ENCODE measurements at regions of chr3 and their contacts with region 1.

Region 1: DNA sequence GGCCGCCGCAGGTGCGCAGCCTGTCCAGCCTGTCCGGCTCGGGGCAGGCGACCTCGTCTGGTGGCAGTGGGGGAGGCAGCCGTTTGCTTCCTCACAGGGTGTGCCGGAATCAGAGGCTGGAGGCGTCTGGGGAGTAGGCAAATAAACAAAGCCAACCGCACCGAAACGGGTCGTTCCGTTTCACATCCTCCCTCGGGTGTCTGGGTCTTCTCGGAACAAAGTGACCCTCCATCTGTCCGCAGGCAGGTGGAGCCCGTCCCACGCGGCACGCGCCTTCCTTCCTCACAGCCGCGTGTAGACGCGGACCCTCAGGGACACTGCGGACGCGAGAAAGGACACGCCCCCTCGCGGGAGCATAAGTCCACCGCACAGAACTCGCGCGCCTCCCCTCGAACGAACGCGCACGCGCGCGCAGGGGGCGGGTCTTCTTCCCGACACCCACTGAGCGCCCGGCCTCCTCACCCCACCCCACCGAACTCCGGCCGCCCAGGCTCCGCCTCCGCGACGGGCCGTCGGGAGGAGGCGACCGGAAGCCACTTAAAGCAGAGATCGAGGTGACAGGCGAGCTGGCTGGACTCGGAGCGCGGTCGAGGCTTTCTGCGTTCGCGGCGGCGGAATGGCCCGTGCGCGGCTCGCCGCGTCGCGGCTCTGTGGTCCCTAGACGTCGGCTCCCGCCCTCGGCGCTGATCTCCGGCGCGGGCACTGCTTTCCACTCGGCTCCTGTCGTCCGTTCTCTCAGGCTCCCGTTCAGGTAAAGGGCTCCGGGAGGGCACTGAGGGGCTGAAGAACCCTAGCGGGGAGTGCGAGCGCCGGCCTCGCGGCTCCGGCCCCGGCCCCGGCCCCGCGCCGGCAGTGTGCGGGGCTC is at the start of gene TIPARP:
- DNase-seq: peak; percentile 98
- H3K4me3 ChIP-seq: peak within 1 kb of the TSS; percentile 61 to 94 (median 76)
- H3K27ac ChIP-seq: peak within 1 kb of the TSS; percentile 99
- H3K4me1 ChIP-seq: peaks cover 22% of the 10 kb centered on the region
- H3K27me3 ChIP-seq: no peaks in the 10 kb centered on the region
- CTCF ChIP-seq: peak; percentile 5 to 44
- total RNA-seq, gene TIPARP: 171 to 229 TPM

Region 2: GRCh38 chr3:156472150-156472549 is 202.1 kb before region 1 on chr3:
- CTCF ChIA-PET with region 1: interaction called, 17 read pairs
- dilution Hi-C with region 1: no loop called
- in situ Hi-C with region 1: no loop called
- intact Hi-C with region 1: no loop called
- DNase-seq: no peak
- H3K4me3 ChIP-seq: no peak overlapping the region
- H3K27ac ChIP-seq: no peak overlapping the region
- H3K4me1 ChIP-seq: no peaks in the 10 kb centered on the region
- H3K27me3 ChIP-seq: peaks cover 5% of the 10 kb centered on the region
- CTCF ChIP-seq: peak in 1 of 2 donors; percentile 14

Region 3: GRCh38 chr3:156554842-156555687 is 119.2 kb before region 1 on chr3 and contains the start of gene SSR3:
- CTCF ChIA-PET with region 1: interaction called, 6 read pairs
- dilution Hi-C with region 1: no loop called
- in situ Hi-C with region 1: loop called (anchors 5 to 10 kb)
- intact Hi-C with region 1: loop called (anchors 1 kb)
- DNase-seq: peak; percentile 99
- H3K4me3 ChIP-seq: peak within 1 kb of the TSS; percentile 97 to 99 (median 97)
- H3K27ac ChIP-seq: peak within 1 kb of the TSS; percentile 87
- H3K4me1 ChIP-seq: peaks cover 34% of the 10 kb centered on the region
- H3K27me3 ChIP-seq: no peaks in the 10 kb centered on the region
- CTCF ChIP-seq: peak in 1 of 2 donors; percentile 8
- total RNA-seq, gene SSR3: 375 to 388 TPM

Region 4: DNA sequence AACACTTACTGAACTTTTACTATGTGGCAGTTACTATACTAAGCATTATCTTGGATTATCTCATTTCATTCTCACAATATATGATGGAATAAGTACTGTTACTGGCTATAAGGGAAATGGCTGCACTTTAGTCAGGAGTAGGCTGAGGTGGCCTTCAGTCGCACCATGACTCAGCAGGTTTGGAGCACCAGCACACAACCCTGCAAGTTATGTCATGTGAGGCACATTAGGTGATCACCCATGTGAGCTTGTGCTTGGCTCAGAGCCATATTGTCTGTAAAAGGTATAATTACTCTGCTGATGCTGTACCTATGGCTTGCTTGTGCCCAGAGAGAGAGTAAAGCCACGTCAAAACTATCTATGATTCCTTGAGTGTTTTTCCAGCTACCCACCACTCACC is 54.0 kb before region 1 on chr3:
- CTCF ChIA-PET with region 1: no interaction called
- dilution Hi-C with region 1: no loop called
- in situ Hi-C with region 1: no loop called
- intact Hi-C with region 1: loop called (anchors 2 kb)
- DNase-seq: peak; percentile 82
- H3K4me3 ChIP-seq: no peak overlapping the region
- H3K27ac ChIP-seq: no peak overlapping the region
- H3K4me1 ChIP-seq: peaks cover 43% of the 10 kb centered on the region
- H3K27me3 ChIP-seq: no peaks in the 10 kb centered on the region
- CTCF ChIP-seq: no peak

Region 5: DNA sequence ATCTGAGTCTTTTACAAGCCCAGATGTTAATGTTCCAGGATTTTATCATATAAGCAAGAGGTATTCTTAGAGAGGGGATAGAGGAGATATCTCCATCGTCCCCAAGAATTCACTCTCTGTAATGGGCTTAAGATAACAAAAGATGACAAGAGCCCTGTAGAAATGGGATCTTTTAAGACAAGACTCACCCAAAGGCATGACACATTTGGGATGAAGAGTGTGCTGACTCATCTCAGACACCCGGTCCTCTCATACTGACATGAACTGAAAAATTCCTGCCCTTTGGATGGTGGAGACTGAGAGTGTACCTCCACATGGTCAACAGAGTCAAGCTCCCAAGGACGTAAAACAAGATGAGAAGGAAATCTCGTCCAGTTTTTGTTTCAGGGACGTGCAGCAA is 162.8 kb after region 1 on chr3:
- CTCF ChIA-PET with region 1: no interaction called
- dilution Hi-C with region 1: no loop called
- in situ Hi-C with region 1: no loop called
- intact Hi-C with region 1: no loop called
- DNase-seq: peak; percentile 56
- H3K4me3 ChIP-seq: no peak overlapping the region
- H3K27ac ChIP-seq: no peak overlapping the region
- H3K4me1 ChIP-seq: no peaks in the 10 kb centered on the region
- H3K27me3 ChIP-seq: no peaks in the 10 kb centered on the region
- CTCF ChIP-seq: no peak

Region 6: GRCh38 chr3:156865732-156866131 is 191.5 kb after region 1 on chr3:
- CTCF ChIA-PET with region 1: no interaction called
- dilution Hi-C with region 1: no loop called
- in situ Hi-C with region 1: no loop called
- intact Hi-C with region 1: loop called (anchors 2 kb)
- DNase-seq: no peak
- H3K4me3 ChIP-seq: no peak overlapping the region
- H3K27ac ChIP-seq: no peak overlapping the region
- H3K4me1 ChIP-seq: peaks cover 11% of the 10 kb centered on the region
- H3K27me3 ChIP-seq: no peaks in the 10 kb centered on the region
- CTCF ChIP-seq: peak in 1 of 2 donors; percentile 36

Measured in mammary epithelial cell (primary cell).